ENCODE measurements at regions of chr10 and their contacts with region 1.

Region 1: GRCh38 chr10:84065804-84066601 is 73.3 kb upstream of the GHITM start:
- DNase-seq: no peak
- H3K4me3 ChIP-seq: no peak overlapping the region
- H3K27ac ChIP-seq: no peak overlapping the region
- H3K4me1 ChIP-seq: no peaks in the 10 kb centered on the region
- H3K27me3 ChIP-seq: 0 out of 2 replicates have a peak, but pooled peaks cover 21% of the 10 kb centered on the region
- CTCF ChIP-seq: no peak

Region 2: GRCh38 chr10:84118395-84119006 is 52.5 kb after region 1 on chr10:
- CTCF ChIA-PET with region 1: interaction called, 12 read pairs
- POLR2A ChIA-PET with region 1: no interaction called
- intact Hi-C with region 1: no loop called
- DNase-seq: peak in 1 of 2 experiments; percentile 40
- H3K4me3 ChIP-seq: no peak overlapping the region
- H3K27ac ChIP-seq: no peak overlapping the region
- H3K4me1 ChIP-seq: no peaks in the 10 kb centered on the region
- H3K27me3 ChIP-seq: peaks cover 33% of the 10 kb centered on the region; the same call in 1 of the 2 replicates
- CTCF ChIP-seq: no peak